Endothelial cell of umbilical vein (primary cell): ENCODE measurements at regions of chr12 and their contacts with region 1.

Region 1: GRCh38 chr12:69254046-69254445 is 14.7 kb downstream of the CPSF6 start:
- DNase-seq: peak; percentile 84
- H3K4me3 ChIP-seq: no peak overlapping the region
- H3K27ac ChIP-seq: peak overlapping the region; percentile 71
- H3K4me1 ChIP-seq: peaks cover 5% of the 10 kb centered on the region
- H3K27me3 ChIP-seq: no peaks in the 10 kb centered on the region
- CTCF ChIP-seq: peak; percentile 45 to 50
- POLR2A ChIP-seq: no peak

Region 2: GRCh38 chr12:68864604-68865003 is 389.4 kb before region 1 on chr12:
- CTCF ChIA-PET with region 1: interaction called, 9 read pairs
- POLR2A ChIA-PET with region 1: no interaction called
- dilution Hi-C with region 1: no loop called
- intact Hi-C with region 1: loop called (anchors 1 kb)
- DNase-seq: no peak
- H3K4me3 ChIP-seq: no peak overlapping the region
- H3K27ac ChIP-seq: no peak overlapping the region
- H3K4me1 ChIP-seq: no peaks in the 10 kb centered on the region
- H3K27me3 ChIP-seq: peaks cover 16 to 21% of the 10 kb centered on the region in 2 experiments
- CTCF ChIP-seq: no peak
- POLR2A ChIP-seq: no peak

Region 3: GRCh38 chr12:69239352-69239921 is 14.6 kb before region 1 on chr12 and contains the start of gene CPSF6:
- CTCF ChIA-PET with region 1: interaction called, 26 read pairs
- POLR2A ChIA-PET with region 1: no interaction called
- dilution Hi-C with region 1: no loop called
- intact Hi-C with region 1: loop called (anchors 1 kb)
- DNase-seq: peak; percentile 95
- H3K4me3 ChIP-seq: peak within 1 kb of the TSS; percentile 60 to 99 (median 99)
- H3K27ac ChIP-seq: peak within 1 kb of the TSS; percentile 89
- H3K4me1 ChIP-seq: peaks cover 17% of the 10 kb centered on the region
- H3K27me3 ChIP-seq: peaks cover 2% of the 10 kb centered on the region in 2 experiments
- CTCF ChIP-seq: no peak
- POLR2A ChIP-seq: peak; percentile 93
- total RNA-seq, gene CPSF6: 86.2 and 91.7 TPM in 2 replicates

Region 4: DNA sequence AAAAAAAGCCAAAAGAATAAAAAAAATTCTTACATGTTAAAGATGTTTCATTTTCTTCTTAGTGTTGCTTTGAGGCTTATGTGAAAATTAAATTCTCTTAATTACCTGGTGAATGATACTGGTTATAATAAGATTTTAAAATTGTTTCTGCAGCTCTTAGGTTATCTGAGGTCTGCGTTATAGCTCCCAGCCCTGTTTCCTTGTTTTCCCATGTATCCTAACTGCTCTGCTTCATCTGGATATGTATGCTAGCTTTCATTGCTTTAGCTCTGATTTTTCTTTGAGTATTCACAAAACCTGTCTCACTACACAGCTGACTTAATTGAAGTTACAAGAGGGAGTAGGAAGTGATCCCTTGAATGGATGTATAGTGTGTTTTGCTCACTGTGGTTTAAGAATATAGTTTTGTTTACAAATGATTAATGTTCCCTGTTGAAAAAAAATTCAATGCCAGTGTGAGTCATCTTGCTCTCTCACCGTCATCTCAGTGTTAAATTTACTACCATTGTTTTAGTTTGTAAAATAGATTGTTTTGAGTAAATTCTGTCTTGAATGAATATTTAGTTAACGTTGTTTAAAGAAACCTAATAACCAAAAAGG is 12.1 kb after region 1 on chr12:
- CTCF ChIA-PET with region 1: interaction called, 43 read pairs
- POLR2A ChIA-PET with region 1: interaction called, 8 read pairs
- dilution Hi-C with region 1: no loop called
- intact Hi-C with region 1: no loop called
- DNase-seq: peak; percentile 86
- H3K4me3 ChIP-seq: no peak overlapping the region
- H3K27ac ChIP-seq: peak overlapping the region; percentile 46
- H3K4me1 ChIP-seq: peaks cover 11% of the 10 kb centered on the region
- H3K27me3 ChIP-seq: no peaks in the 10 kb centered on the region
- CTCF ChIP-seq: no peak
- POLR2A ChIP-seq: no peak

Region 5: DNA sequence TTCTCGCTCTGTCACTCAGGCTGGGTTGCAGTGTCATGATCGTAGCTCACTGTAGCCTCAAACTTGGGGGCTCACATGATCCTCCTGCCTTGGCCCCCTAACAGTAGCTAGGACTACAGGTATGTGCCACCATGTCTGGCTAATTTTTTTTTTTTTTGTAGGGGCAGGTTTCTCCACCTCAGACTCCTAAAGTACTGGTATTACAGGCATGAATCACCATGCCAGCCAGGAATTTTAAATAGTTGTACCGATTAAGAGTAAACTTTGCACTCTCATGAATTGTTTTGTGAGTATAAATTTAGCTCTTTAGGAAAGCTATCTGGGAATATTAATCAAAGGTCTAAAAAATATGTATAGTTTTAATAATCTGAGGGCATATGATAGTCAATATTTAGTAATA is 131.0 kb after region 1 on chr12:
- CTCF ChIA-PET with region 1: no interaction called
- POLR2A ChIA-PET with region 1: no interaction called
- dilution Hi-C with region 1: no loop called
- intact Hi-C with region 1: no loop called
- DNase-seq: no peak
- H3K4me3 ChIP-seq: no peak overlapping the region
- H3K27ac ChIP-seq: no peak overlapping the region
- H3K4me1 ChIP-seq: peaks cover 6% of the 10 kb centered on the region
- H3K27me3 ChIP-seq: no peaks in the 10 kb centered on the region
- CTCF ChIP-seq: no peak
- POLR2A ChIP-seq: no peak